ENCODE measurements at regions of chr4 and their contacts with region 1.

Region 1: GRCh38 chr4:177309522-177310371 is at the start of gene NEIL3:
- DNase-seq: peak; percentile 91 to 94 (median 91)
- H3K4me3 ChIP-seq: peak within 1 kb of the TSS; percentile 64 to 92
- H3K4me3 Mint-ChIP-seq: peak within 1 kb of the TSS; percentile 86 to 96 (median 91)
- H3K27ac ChIP-seq: peak within 1 kb of the TSS; percentile 51
- H3K27ac Mint-ChIP-seq: peak within 1 kb of the TSS; percentile 67 to 93 (median 88)
- H3K4me1 ChIP-seq: peaks cover 35% of the 10 kb centered on the region
- H3K4me1 Mint-ChIP-seq: peaks cover 15 to 41% (median 22%) of the 10 kb centered on the region in 4 donors
- H3K27me3 ChIP-seq: no peaks in the 10 kb centered on the region
- H3K27me3 Mint-ChIP-seq: no peaks in the 10 kb centered on the region
- total RNA-seq, gene NEIL3: 0.15 to 0.17 TPM

Region 2: DNA sequence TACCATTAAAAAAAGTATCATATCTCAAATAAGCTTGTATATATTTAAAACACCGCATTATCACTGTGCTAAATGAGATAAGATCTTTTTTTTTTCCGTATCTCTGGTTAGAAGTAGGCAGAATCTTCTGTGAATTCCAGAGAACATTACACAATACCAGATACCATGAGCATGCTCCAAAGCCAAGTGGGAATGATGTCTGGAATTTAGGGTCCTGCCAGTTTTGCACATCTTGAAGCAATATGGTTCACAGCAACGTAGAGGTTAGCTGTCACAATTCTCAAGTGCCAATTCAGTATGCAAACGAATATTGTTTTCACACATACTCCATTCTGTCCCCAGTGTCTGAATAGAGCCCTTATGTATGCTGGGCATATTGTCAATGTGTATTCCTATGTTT is 127.6 kb before region 1 on chr4:
- CTCF ChIA-PET with region 1: no interaction called
- POLR2A ChIA-PET with region 1: no interaction called
- intact Hi-C with region 1: no loop called
- DNase-seq: no peak
- H3K4me3 ChIP-seq: no peak overlapping the region
- H3K4me3 Mint-ChIP-seq: no peak overlapping the region
- H3K27ac ChIP-seq: no peak overlapping the region
- H3K27ac Mint-ChIP-seq: no peak overlapping the region
- H3K4me1 ChIP-seq: no peaks in the 10 kb centered on the region
- H3K4me1 Mint-ChIP-seq: no peaks in the 10 kb centered on the region
- H3K27me3 ChIP-seq: no peaks in the 10 kb centered on the region
- H3K27me3 Mint-ChIP-seq: no peaks in the 10 kb centered on the region

Region 3: GRCh38 chr4:177322266-177322665 is 12.5 kb after region 1 on chr4:
- CTCF ChIA-PET with region 1: interaction called, 5 read pairs
- POLR2A ChIA-PET with region 1: interaction called, 41 read pairs
- intact Hi-C with region 1: no loop called
- DNase-seq: no peak
- H3K4me3 ChIP-seq: no peak overlapping the region
- H3K4me3 Mint-ChIP-seq: no peak overlapping the region
- H3K27ac ChIP-seq: no peak overlapping the region
- H3K27ac Mint-ChIP-seq: peak overlapping the region in 2 of 7 donors; percentile 15 to 54
- H3K4me1 ChIP-seq: peaks cover 56% of the 10 kb centered on the region
- H3K4me1 Mint-ChIP-seq: peaks cover 38 to 69% (median 57%) of the 10 kb centered on the region in 4 donors
- H3K27me3 ChIP-seq: no peaks in the 10 kb centered on the region
- H3K27me3 Mint-ChIP-seq: no peaks in the 10 kb centered on the region

Region 4: DNA sequence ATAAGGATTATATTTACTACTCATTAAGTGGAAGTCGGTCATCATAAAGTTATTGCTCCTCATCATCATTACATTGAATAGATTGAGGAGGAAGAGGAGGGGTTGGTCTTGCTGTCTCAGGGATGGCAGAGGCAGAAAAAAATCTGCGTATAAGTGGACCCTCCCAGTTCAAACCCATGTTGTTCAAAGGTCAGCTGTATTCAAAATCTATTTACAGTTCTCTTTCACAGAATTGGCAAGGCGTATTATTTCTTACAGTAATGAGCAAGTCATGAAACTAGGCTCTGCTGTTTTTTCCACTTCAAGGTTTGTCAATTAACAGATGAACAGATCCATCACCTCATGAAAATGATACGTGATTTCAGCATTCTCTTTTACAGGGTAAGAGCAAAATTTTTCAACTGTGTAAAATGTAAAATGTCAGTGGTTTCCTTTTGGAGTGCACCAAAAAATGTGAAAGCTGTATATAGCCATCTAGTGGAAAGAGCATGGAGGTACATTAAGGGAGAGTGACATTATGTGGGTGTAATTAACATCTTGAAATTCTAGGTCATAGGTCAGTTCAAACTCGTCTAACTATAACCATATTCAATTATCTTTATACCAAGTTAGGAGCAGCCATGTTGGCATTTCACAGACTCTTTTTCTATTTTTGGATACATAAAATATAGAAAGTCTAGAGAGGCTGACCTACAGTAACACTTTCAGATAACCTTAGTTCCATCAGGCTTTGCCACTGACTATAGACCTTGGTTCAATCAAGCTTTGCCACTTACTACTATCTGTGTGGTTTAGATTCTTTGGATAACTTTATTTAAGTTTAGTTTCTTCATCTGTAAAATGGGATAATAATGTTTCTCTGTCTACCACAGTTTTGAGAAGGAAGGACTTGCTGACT is 30.0 kb after region 1 on chr4:
- CTCF ChIA-PET with region 1: interaction called, 26 read pairs
- POLR2A ChIA-PET with region 1: interaction called, 8 read pairs
- intact Hi-C with region 1: no loop called
- DNase-seq: peak in 4 of 5 donors; percentile 38 to 57 (median 50)
- H3K4me3 ChIP-seq: no peak overlapping the region
- H3K4me3 Mint-ChIP-seq: peak overlapping the region in 3 of 8 donors; percentile 53 to 66 (median 53)
- H3K27ac ChIP-seq: no peak overlapping the region
- H3K27ac Mint-ChIP-seq: peak overlapping the region in 3 of 7 donors; percentile 3 to 67 (median 48)
- H3K4me1 ChIP-seq: peaks cover 9% of the 10 kb centered on the region
- H3K4me1 Mint-ChIP-seq: peaks cover 7 to 15% (median 10%) of the 10 kb centered on the region in 4 donors
- H3K27me3 ChIP-seq: no peaks in the 10 kb centered on the region
- H3K27me3 Mint-ChIP-seq: no peaks in the 10 kb centered on the region

Measured in CD4-positive, alpha-beta memory T cell (primary cell).